ENCODE measurements at regions of chr6 and their contacts with region 1.

Region 1: GRCh38 chr6:158718461-158719046 is 68.7 kb downstream of the SYTL3 start:
- DNase-seq: peak; percentile 76
- ATAC-seq: peak; percentile 92
- H3K4me3 Mint-ChIP-seq: no peak overlapping the region
- H3K27ac Mint-ChIP-seq: no peak overlapping the region
- H3K4me1 Mint-ChIP-seq: peaks cover 11% of the 10 kb centered on the region
- H3K27me3 Mint-ChIP-seq: no peaks in the 10 kb centered on the region
- CTCF ChIP-seq: peak; percentile 93

Region 2: DNA sequence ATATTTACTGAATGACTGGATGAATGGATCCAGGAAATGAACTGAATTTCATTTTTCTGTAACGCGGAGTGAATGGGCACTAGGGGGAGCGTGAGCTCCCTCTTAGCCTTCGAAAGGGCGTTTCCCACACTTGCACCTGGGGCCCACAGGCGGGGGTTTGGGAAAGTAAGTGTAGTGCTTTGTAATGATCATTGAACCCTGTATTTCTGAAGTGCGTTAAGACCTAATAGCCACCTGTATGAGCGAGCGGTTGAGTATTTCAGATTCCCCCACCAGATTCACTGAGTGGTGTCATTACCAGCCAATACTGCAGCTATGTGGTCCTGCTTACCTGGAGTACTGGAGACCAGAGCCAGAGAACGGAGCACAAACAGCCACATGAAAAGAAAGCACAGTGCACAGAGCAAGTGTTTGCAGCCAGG is 58.2 kb before region 1 on chr6:
- CTCF ChIA-PET with region 1: interaction called, 10 read pairs
- POLR2A ChIA-PET with region 1: no interaction called
- DNase-seq: peak; percentile 52
- ATAC-seq: peak; percentile 78
- H3K4me3 Mint-ChIP-seq: no peak overlapping the region
- H3K27ac Mint-ChIP-seq: no peak overlapping the region
- H3K4me1 Mint-ChIP-seq: peaks cover 23% of the 10 kb centered on the region
- H3K27me3 Mint-ChIP-seq: peaks cover 2% of the 10 kb centered on the region; the same call in 1 of the 2 replicates
- CTCF ChIP-seq: no peak; the same call in 1 of the 2 replicates

Region 3: GRCh38 chr6:158729914-158730907 is 11.7 kb after region 1 on chr6:
- CTCF ChIA-PET with region 1: interaction called, 23 read pairs
- POLR2A ChIA-PET with region 1: no interaction called
- DNase-seq: peak; percentile 71
- ATAC-seq: peak; percentile 94
- H3K4me3 Mint-ChIP-seq: peak overlapping the region; percentile 45
- H3K27ac Mint-ChIP-seq: peak overlapping the region; percentile 84
- H3K4me1 Mint-ChIP-seq: 0 out of 2 replicates have a peak, but pooled peaks cover 3% of the 10 kb centered on the region
- H3K27me3 Mint-ChIP-seq: peaks cover 2% of the 10 kb centered on the region; the same call in 1 of the 2 replicates
- CTCF ChIP-seq: no peak

Region 4: GRCh38 chr6:158762787-158763433 is 44.4 kb after region 1 on chr6:
- CTCF ChIA-PET with region 1: interaction called, 27 read pairs
- POLR2A ChIA-PET with region 1: no interaction called
- DNase-seq: no peak
- ATAC-seq: peak; percentile 5
- H3K4me3 Mint-ChIP-seq: no peak overlapping the region
- H3K27ac Mint-ChIP-seq: peak overlapping the region; percentile 69
- H3K4me1 Mint-ChIP-seq: peaks cover 27% of the 10 kb centered on the region
- H3K27me3 Mint-ChIP-seq: no peaks in the 10 kb centered on the region
- CTCF ChIP-seq: no peak

Region 5: GRCh38 chr6:158837684-158838625 is 119.4 kb after region 1 on chr6:
- CTCF ChIA-PET with region 1: no interaction called
- POLR2A ChIA-PET with region 1: no interaction called
- DNase-seq: no peak
- ATAC-seq: no peak
- H3K4me3 Mint-ChIP-seq: no peak overlapping the region
- H3K27ac Mint-ChIP-seq: no peak overlapping the region
- H3K4me1 Mint-ChIP-seq: peaks cover 20% of the 10 kb centered on the region
- H3K27me3 Mint-ChIP-seq: no peaks in the 10 kb centered on the region; the same call in 1 of the 2 replicates
- CTCF ChIP-seq: no peak

Region 6: GRCh38 chr6:158928068-158928467 is 209.5 kb after region 1 on chr6:
- CTCF ChIA-PET with region 1: no interaction called
- POLR2A ChIA-PET with region 1: no interaction called
- DNase-seq: no peak
- ATAC-seq: no peak
- H3K4me3 Mint-ChIP-seq: no peak overlapping the region
- H3K27ac Mint-ChIP-seq: no peak overlapping the region
- H3K4me1 Mint-ChIP-seq: peaks cover 18% of the 10 kb centered on the region
- H3K27me3 Mint-ChIP-seq: no peaks in the 10 kb centered on the region
- CTCF ChIP-seq: no peak

Region 7: GRCh38 chr6:158958504-158959386 is 240.2 kb after region 1 on chr6:
- CTCF ChIA-PET with region 1: interaction called, 10 read pairs
- POLR2A ChIA-PET with region 1: no interaction called
- DNase-seq: no peak
- ATAC-seq: no peak
- H3K4me3 Mint-ChIP-seq: no peak overlapping the region
- H3K27ac Mint-ChIP-seq: no peak overlapping the region
- H3K4me1 Mint-ChIP-seq: 0 out of 2 replicates have a peak, but pooled peaks cover 4% of the 10 kb centered on the region
- H3K27me3 Mint-ChIP-seq: no peaks in the 10 kb centered on the region
- CTCF ChIP-seq: no peak

Region 8: DNA sequence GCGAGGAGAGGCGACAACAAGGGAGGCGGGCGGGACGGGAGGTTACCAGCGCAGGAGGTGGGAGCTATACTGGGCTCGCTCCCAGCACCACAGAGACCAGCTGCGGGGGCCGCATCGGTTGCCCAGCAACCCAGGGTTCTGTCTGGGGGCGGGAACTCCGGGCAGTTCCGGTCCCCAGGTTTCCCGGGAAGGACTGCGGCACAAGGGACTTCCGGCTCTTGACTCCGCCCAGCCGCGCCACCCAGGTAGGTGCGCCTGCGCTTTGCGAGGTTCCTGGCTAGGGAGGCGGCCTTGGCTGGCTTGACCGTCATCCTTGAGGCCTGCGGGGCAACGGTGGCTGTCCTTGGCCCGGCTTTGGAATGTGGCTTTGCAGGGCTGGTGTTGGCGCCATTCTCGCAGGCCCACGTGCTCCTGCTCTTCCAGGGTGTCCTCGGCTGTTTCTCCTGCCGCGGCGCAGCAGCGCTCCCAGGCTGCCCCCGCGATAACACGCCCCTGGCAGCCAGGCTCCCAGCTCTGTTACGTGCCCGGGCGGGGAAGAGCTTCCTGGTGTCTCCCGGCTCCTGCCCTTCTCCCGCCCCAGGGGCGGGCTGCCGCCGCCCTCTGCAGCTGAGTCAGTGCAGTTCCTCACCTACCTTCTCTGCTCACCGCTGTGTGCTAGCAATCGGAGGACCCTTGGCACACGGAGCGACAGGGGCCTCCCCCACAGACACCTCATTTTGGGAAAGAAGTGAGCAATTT is 281.3 kb after region 1 on chr6 and contains the start of gene RSPH3:
- CTCF ChIA-PET with region 1: interaction called, 10 read pairs
- POLR2A ChIA-PET with region 1: no interaction called
- DNase-seq: peak; percentile 98
- ATAC-seq: peak; percentile 91
- H3K4me3 Mint-ChIP-seq: peak within 1 kb of the TSS; percentile 95
- H3K27ac Mint-ChIP-seq: peak within 1 kb of the TSS; percentile 97
- H3K4me1 Mint-ChIP-seq: peaks cover 16% of the 10 kb centered on the region
- H3K27me3 Mint-ChIP-seq: no peaks in the 10 kb centered on the region
- CTCF ChIP-seq: no peak
- total RNA-seq, gene RSPH3: 2.4 to 3.2 TPM (median 2.7 TPM) in 3 replicates

Measured in WTC11 (cell line).